Activated CD4-positive, alpha-beta memory T cell treated with anti-CD3 and anti-CD28 coated beads, Interleukin-2, amount 10 ng/mL, durations not matched to agents 7 days and 5 days (primary cell): ENCODE measurements at regions of chr1 and their contacts with region 1.

Region 1: GRCh38 chr1:179002552-179003345 is 22.9 kb upstream of the FAM20B start:
- DNase-seq: peak; percentile 61
- H3K4me3 Mint-ChIP-seq: no peak overlapping the region
- H3K27ac Mint-ChIP-seq: no peak overlapping the region
- H3K4me1 Mint-ChIP-seq: peaks cover 10% of the 10 kb centered on the region
- H3K27me3 Mint-ChIP-seq: no peaks in the 10 kb centered on the region

Region 2: DNA sequence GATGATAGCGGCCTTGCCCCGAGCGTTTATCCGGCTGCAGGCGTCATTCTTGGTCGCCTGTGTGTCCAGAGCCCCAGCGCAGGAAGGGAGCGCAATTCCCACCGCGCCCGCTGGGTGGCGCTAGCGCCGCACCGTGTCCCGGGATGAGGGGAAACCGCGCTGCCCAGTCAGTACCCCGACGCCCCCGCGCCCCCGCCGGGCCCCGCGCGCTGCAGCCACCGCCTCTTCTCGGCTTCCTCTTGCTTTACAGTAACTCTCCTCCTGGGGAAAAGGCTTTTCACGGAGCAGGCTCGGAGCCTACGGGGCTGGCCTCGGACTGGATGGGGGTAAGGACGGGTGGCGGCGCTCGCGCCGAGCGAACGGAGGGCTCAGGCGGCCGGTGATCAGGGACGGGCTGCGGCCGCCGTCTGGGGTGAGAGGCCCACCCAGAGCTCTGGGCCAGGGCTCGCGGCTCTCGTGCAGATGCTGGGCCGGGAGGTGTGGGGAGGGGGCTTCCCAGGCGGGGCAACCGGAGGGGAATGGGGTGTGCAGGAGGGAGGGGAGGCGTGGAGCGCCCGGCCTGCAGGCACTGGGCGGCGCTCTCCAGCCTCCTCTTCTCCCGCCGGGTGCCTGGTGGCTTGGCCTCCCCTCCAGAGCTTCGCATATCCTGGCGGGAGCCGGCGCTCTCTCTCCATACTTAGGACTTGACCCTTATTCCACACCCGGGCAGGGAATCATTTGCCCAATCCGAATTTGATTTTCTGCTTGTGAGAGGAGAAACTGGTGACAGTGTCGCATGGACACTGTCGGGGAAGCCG is 460.0 kb before region 1 on chr1:
- CTCF ChIA-PET with region 1: interaction called, 14 read pairs
- POLR2A ChIA-PET with region 1: no interaction called
- DNase-seq: peak; percentile 87
- H3K4me3 Mint-ChIP-seq: peak overlapping the region; percentile 86
- H3K27ac Mint-ChIP-seq: peak overlapping the region; percentile 81
- H3K4me1 Mint-ChIP-seq: peaks cover 16% of the 10 kb centered on the region
- H3K27me3 Mint-ChIP-seq: no peaks in the 10 kb centered on the region

Region 3: DNA sequence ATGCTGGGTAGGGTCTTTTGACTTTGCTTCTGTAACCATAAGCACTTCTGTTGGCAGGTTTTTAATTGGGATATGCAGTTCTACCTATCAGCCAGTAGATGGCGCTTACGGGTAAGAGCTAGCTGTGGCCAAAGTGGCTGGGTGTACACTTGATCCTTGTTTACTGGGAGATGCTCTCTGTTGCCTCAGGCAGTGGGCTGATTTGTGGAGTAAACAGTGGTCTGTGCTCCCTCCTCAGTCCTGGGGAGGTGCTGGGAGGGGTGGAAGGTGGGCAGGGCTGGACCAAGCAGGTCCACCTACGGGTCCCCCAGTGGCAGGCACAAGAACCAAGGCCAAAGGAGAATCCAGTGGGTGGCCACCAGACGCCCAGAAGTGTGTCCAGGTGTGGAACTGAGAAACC is 234.3 kb before region 1 on chr1:
- CTCF ChIA-PET with region 1: interaction called, 16 read pairs
- POLR2A ChIA-PET with region 1: no interaction called
- DNase-seq: peak; percentile 19
- H3K4me3 Mint-ChIP-seq: no peak overlapping the region
- H3K27ac Mint-ChIP-seq: no peak overlapping the region
- H3K4me1 Mint-ChIP-seq: no peaks in the 10 kb centered on the region
- H3K27me3 Mint-ChIP-seq: no peaks in the 10 kb centered on the region

Region 4: DNA sequence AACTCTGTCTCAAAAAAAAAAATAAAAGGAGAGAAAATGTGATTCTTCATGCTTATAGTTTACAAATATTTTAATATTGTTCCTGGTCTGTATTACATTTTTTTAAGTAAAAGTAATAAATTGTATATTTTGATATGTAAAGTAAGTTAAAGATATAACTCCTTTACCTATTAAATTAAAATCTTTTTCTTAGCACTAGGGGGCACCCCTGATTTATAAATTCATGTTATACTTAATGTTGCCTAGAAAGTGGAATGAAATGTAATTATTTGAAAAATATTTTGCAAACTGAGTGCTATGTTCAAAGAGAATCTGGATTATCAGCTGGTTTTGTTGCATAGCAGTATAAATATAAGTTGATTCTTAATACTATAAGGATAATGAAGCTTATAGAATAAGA is 228.5 kb before region 1 on chr1:
- CTCF ChIA-PET with region 1: interaction called, 12 read pairs
- POLR2A ChIA-PET with region 1: no interaction called
- DNase-seq: no peak
- H3K4me3 Mint-ChIP-seq: no peak overlapping the region
- H3K27ac Mint-ChIP-seq: no peak overlapping the region
- H3K4me1 Mint-ChIP-seq: no peaks in the 10 kb centered on the region
- H3K27me3 Mint-ChIP-seq: no peaks in the 10 kb centered on the region